ENCODE measurements at regions of chr3 and their contacts with region 1.

Region 1: DNA sequence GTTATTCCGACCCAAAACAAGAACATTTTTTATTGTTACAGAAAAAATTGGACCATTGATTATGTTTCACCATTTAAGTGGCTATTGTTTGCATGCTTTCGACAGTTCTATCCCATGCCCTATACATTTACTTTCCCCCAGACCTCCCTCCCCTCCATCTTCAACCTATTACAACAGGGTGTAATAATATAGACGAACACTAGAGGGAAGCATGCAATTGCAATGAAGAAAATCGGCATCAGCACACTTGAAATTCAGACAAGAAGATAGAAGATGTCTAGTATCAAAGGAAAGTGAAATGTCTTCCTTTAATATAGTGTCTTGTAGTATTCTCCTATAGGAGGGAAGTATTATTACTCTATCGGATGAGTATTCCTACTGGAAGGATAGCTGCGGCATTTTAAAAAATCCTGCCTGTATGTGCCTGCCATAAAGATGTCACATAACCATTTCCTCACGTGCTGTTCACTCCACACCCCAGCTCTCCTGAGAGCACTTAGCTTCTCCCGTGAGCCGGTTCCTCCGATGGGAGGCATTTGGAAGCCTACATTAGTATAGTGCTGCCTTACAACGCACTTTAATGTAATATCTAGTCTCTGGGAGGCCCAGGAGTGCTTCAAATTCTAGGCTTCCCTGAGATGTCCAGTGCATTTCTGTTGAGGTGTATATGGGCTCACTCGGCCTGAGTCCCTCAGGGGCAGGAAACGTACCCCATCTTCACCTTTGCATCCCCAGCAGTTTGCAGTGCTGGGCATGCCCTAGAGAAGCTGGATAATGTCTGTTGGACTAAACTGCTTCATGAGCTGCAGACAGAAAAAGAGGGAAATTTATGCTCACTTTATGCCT is 17.8 kb upstream of the ERICH6 start:
- DNase-seq: no peak
- H3K4me3 ChIP-seq: peak overlapping the region in 1 of 2 donors; percentile 21
- H3K27ac ChIP-seq: no peak overlapping the region
- H3K4me1 ChIP-seq: peaks cover 0 to 5% (median 2%) of the 10 kb centered on the region in 4 donors
- H3K27me3 ChIP-seq: no peaks in the 10 kb centered on the region
- CTCF ChIP-seq: peak; percentile 84 to 91

Region 2: GRCh38 chr3:150000641-150001040 is 720.9 kb before region 1 on chr3:
- intact Hi-C with region 1: no loop called
- DNase-seq: no peak
- H3K4me3 ChIP-seq: no peak overlapping the region
- H3K27ac ChIP-seq: no peak overlapping the region
- H3K4me1 ChIP-seq: no peaks in the 10 kb centered on the region
- H3K27me3 ChIP-seq: no peaks in the 10 kb centered on the region
- CTCF ChIP-seq: no peak

Region 3: DNA sequence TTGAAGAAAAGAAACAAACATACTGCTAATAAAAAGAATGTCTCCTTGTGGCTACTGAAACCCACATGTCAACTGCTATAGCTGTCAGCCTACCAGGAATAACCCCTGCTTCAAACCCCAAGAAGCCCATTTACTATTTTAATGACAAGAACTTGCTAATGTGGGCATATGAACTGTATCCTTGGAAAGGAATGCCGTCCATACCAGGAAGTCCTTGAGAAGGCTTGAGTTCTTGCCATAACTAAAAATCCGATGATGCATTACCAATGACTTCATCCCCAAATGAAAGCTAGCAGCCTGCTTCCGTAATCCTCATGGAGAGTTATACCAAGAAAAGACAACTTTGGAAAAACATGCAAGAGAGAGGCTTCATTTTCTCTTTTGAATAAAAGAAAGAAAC is 148.9 kb after region 1 on chr3:
- intact Hi-C with region 1: loop called (anchors 2 kb)
- DNase-seq: no peak
- H3K4me3 ChIP-seq: no peak overlapping the region
- H3K27ac ChIP-seq: no peak overlapping the region
- H3K4me1 ChIP-seq: peaks cover 0 to 7% (median 0%) of the 10 kb centered on the region in 4 donors
- H3K27me3 ChIP-seq: no peaks in the 10 kb centered on the region
- CTCF ChIP-seq: no peak

Measured in tibial artery (tissue), 4 donors.